PC-3 (cell line): ENCODE measurements at regions of chr3 and their contacts with region 1.

Region 1: DNA sequence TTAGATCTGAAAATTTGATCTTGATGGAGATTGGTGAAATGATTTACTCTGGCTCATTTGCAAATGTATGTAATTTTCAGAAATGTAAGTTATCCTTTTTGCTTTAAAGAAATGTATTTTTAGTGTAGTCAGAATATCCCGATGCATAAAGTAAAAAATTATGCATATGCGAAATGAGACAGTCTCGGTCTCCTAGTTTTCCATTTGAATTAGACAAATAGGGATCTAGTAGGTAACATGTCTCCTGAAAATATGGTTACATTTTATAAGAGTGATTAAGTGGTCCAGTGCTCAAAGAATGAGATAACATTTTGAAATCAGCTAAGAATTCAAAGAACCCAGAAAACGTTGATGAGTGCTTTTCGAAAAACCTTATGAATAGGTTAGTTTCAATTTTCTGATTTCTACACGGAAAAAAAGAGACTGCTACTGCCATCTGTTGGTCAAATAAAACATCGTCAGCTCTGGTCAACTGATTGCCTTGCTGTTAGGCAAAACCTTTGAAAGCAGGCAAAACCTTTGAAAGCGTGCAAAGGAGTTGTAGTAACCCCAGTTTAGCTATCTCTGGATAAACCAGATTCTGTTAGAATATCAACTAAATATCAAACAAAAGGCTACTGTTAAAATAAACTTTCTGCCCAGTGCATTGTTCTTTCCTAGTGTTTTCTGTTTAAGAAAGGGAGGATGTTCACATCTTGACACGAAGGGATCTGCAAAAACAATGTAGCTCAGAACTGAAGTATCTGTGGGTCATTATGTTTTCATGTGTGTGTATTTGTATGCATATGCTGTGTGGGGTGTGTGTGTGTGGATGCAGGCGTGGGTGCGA is 59.3 kb upstream of the CHMP2B start:
- DNase-seq: peak; percentile 84
- ATAC-seq: peak; percentile 81
- H3K4me3 ChIP-seq: peak overlapping the region; percentile 67
- H3K27ac ChIP-seq: no peak overlapping the region
- H3K4me1 ChIP-seq: no peaks in the 10 kb centered on the region
- H3K27me3 ChIP-seq: no peaks in the 10 kb centered on the region
- CTCF ChIP-seq: peak; percentile 86

Region 2: GRCh38 chr3:86774082-86774691 is 393.7 kb before region 1 on chr3:
- CTCF ChIA-PET with region 1: no interaction called
- POLR2A ChIA-PET with region 1: no interaction called
- intact Hi-C with region 1: loop called (anchors 2 kb)
- DNase-seq: peak; percentile 74
- ATAC-seq: peak; percentile 49; the same call in 1 of the 2 replicates
- H3K4me3 ChIP-seq: no peak overlapping the region
- H3K27ac ChIP-seq: no peak overlapping the region
- H3K4me1 ChIP-seq: no peaks in the 10 kb centered on the region
- H3K27me3 ChIP-seq: no peaks in the 10 kb centered on the region
- CTCF ChIP-seq: peak; percentile 79

Region 3: DNA sequence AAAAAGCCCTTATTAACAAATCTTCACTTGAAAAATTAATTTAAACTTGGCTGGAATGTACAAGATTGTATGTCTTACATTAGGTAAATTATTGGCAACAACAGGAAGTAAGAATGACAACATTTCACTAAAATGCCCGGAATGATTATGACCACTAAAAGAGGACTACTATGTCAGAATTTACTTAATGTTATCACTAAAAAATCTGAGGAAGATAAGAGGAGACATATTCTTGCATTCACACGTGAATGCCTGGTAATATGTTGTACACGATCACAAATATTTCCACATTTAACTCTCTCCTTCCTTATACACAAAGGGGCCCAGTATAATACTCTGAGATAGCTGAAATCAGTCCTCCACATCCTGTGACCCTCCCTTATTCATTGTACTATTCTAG is 206.5 kb before region 1 on chr3:
- CTCF ChIA-PET with region 1: no interaction called
- POLR2A ChIA-PET with region 1: no interaction called
- intact Hi-C with region 1: loop called (anchors 5 kb)
- DNase-seq: peak; percentile 15
- ATAC-seq: no peak
- H3K4me3 ChIP-seq: no peak overlapping the region
- H3K27ac ChIP-seq: 0 out of 2 replicates have a peak overlapping the region, but pooled peaks have one; percentile 19
- H3K4me1 ChIP-seq: peaks cover 16% of the 10 kb centered on the region
- H3K27me3 ChIP-seq: no peaks in the 10 kb centered on the region
- CTCF ChIP-seq: no peak

Region 4: GRCh38 chr3:87006844-87007439 is 160.9 kb before region 1 on chr3:
- CTCF ChIA-PET with region 1: interaction called, 9 read pairs
- POLR2A ChIA-PET with region 1: no interaction called
- intact Hi-C with region 1: loop called (anchors 1 kb)
- DNase-seq: peak; percentile 51
- ATAC-seq: peak; percentile 49; the same call in 1 of the 2 replicates
- H3K4me3 ChIP-seq: no peak overlapping the region
- H3K27ac ChIP-seq: no peak overlapping the region
- H3K4me1 ChIP-seq: no peaks in the 10 kb centered on the region
- H3K27me3 ChIP-seq: no peaks in the 10 kb centered on the region
- CTCF ChIP-seq: peak; percentile 81

Region 5: GRCh38 chr3:87082796-87083440 is 84.9 kb before region 1 on chr3:
- CTCF ChIA-PET with region 1: interaction called, 4 read pairs
- POLR2A ChIA-PET with region 1: no interaction called
- intact Hi-C with region 1: loop called (anchors 1 kb)
- DNase-seq: peak; percentile 85
- ATAC-seq: peak; percentile 97
- H3K4me3 ChIP-seq: peak overlapping the region; percentile 47
- H3K27ac ChIP-seq: no peak overlapping the region
- H3K4me1 ChIP-seq: peaks cover 9% of the 10 kb centered on the region; the same call in 1 of the 2 replicates
- H3K27me3 ChIP-seq: no peaks in the 10 kb centered on the region
- CTCF ChIP-seq: peak; percentile 91

Region 6: DNA sequence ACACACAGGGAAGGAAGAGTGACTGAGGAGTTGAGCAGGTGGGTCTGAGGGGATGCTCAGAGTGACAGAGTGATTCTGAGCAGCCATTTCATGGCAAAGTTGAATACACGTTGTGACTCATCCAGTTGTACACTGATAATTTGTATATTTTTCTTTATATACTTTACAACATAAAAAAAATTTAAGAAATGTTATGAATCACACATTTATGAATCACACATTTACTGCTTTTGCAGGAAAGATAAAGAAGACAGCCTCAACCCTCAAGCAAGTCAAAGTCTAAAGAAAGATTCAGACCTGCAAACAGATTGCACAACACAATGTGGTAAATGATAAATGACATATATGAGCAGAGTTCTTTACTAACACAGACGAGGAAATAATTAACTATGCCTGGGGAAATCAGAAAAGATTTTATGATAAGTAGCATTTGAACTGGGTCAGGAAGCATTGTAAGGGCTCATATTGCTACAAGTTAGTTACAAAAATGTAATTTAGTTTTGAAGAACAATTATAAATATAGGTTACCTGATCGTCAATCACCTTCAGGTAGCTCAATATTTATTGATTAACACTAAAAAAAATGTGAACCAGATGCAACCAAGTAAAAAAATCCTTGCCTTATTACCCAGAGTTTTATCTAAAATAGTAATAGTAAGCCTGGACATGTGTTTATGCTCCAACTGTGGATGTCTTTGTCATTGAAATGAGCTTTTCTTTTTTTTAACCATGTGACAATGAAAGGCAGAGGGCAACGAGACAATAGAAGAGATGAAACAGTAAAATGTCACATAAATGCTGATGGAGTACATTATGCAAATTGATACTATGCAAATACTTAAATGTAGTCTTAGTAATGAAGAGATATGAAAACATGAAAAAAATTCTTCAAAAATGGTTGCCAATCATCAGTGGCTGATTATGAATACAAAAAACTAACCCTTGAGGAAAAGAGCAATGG is 38.5 kb after region 1 on chr3:
- CTCF ChIA-PET with region 1: no interaction called
- POLR2A ChIA-PET with region 1: no interaction called
- intact Hi-C with region 1: loop called (anchors 1 kb)
- DNase-seq: peak; percentile 98
- ATAC-seq: peak; percentile 82
- H3K4me3 ChIP-seq: peak overlapping the region; percentile 15
- H3K27ac ChIP-seq: peak overlapping the region; percentile 91
- H3K4me1 ChIP-seq: peaks cover 52% of the 10 kb centered on the region
- H3K27me3 ChIP-seq: no peaks in the 10 kb centered on the region
- CTCF ChIP-seq: no peak

Region 7: DNA sequence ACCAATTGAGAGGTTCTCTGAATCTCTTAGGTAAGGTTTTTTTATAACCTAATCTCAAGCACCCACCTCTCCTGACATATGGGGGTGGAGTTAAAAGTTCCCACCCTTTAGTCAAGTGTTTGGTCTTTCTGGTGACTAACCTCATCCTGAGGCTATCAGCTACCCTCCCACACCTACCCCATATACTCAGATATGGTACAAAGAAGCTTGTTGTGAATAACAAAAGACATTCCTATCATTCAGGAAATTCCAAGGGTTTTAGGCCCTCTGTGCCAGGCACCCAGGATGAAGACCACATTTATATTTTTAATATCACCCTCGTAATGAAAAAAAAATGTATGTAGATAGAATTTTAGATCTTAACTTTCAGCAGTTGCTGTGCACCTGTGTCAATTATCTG is 68.3 kb after region 1 on chr3:
- CTCF ChIA-PET with region 1: no interaction called
- POLR2A ChIA-PET with region 1: no interaction called
- intact Hi-C with region 1: no loop called
- DNase-seq: no peak
- ATAC-seq: no peak
- H3K4me3 ChIP-seq: no peak overlapping the region
- H3K27ac ChIP-seq: no peak overlapping the region
- H3K4me1 ChIP-seq: no peaks in the 10 kb centered on the region
- H3K27me3 ChIP-seq: no peaks in the 10 kb centered on the region
- CTCF ChIP-seq: no peak

Region 8: DNA sequence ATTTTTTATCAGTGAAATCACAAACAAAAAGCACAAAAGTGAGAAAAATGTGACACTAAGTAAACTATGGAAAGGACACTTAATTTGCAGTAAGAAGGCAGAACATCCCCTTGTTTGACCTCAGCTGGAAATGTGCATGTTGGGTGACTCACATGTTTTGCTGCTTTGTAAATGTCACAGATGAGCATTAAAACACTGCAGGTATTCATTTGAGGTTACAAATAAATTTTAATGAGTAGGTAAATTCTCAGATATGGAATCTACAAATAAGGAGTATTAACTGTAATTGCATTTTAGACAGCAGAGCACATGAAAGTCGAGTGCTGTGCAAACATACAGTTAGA is 79.6 kb after region 1 on chr3:
- CTCF ChIA-PET with region 1: no interaction called
- POLR2A ChIA-PET with region 1: no interaction called
- intact Hi-C with region 1: loop called (anchors 5 kb)
- DNase-seq: peak; percentile 22
- ATAC-seq: peak; percentile 56
- H3K4me3 ChIP-seq: no peak overlapping the region
- H3K27ac ChIP-seq: peak overlapping the region; percentile 59
- H3K4me1 ChIP-seq: peaks cover 30% of the 10 kb centered on the region
- H3K27me3 ChIP-seq: no peaks in the 10 kb centered on the region
- CTCF ChIP-seq: no peak